Activated CD4-positive, alpha-beta T cell treated with anti-CD3 and anti-CD28 coated beads for 36 hours (primary cell): ENCODE measurements at regions of chr6 and their contacts with region 1.

Region 1: GRCh38 chr6:24283043-24283985 is 74.5 kb downstream of the DCDC2 start:
- DNase-seq: peak; percentile 68
- ATAC-seq: peak; percentile 89
- H3K4me3 Mint-ChIP-seq: no peak overlapping the region
- H3K27ac Mint-ChIP-seq: no peak overlapping the region
- H3K4me1 Mint-ChIP-seq: peaks cover 6% of the 10 kb centered on the region
- H3K27me3 Mint-ChIP-seq: peaks cover 12% of the 10 kb centered on the region

Region 2: DNA sequence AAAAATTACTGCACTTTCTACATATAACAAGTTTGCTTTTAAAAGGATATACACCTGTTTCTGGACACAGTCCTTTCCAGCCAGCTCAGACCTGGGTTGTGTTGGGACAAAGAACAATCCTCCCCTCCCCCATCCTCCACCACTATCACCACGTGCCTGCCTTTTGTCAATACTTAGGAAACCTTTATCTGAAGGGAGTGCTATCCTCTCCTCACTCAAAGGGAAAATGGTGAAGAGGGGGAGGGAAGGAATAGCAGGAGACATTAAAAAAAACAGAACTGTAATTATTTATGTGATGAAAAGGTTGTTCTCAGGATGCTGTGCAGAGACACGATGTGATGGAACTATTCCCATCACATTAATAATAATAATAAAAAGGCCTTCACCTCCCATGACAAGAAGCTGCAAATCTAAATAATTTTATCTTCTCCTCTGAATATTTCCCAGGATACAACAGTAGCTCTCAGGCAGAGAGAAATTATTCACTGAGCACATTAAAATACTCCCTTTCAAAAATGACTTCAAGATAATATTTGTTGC is 51.8 kb before region 1 on chr6:
- CTCF ChIA-PET with region 1: no interaction called
- POLR2A ChIA-PET with region 1: no interaction called
- intact Hi-C with region 1: no loop called
- DNase-seq: no peak
- ATAC-seq: no peak
- H3K4me3 Mint-ChIP-seq: no peak overlapping the region
- H3K27ac Mint-ChIP-seq: no peak overlapping the region
- H3K4me1 Mint-ChIP-seq: no peaks in the 10 kb centered on the region
- H3K27me3 Mint-ChIP-seq: peaks cover 22% of the 10 kb centered on the region

Region 3: DNA sequence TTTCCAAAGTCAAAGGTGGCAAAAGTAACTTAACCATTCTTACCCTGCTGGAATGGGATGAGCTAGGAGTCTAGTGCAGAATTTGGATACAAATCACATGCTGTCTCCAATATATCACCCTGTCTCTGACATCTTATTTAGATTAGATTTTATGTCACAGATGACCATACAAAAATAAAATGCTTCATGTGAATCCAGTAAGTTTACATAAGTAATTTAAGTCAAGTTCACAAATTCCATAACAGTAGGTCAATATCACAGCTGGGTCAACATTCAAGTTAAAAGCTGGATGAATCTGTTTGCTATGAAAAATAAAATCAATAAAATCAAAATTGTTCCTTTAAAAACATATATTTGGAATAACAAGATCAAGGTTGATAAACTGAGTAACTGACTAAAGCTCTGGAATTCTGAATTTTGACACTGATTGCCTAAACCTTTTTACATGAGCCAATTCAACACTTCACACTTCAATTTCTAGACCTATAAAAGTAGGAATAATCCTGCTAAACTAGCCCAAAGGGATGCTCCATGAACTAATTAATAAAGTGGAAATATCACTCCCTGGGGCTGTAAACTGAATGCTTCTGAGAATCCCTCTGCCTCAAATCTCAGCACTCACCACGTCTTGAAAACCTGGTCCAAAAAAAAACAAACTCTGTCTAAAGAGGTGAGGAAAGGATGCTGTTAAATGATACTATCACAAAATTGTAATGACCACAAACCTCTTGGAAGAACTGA is 23.5 kb after region 1 on chr6:
- CTCF ChIA-PET with region 1: no interaction called
- POLR2A ChIA-PET with region 1: no interaction called
- intact Hi-C with region 1: no loop called
- DNase-seq: no peak
- ATAC-seq: no peak
- H3K4me3 Mint-ChIP-seq: no peak overlapping the region
- H3K27ac Mint-ChIP-seq: no peak overlapping the region
- H3K4me1 Mint-ChIP-seq: no peaks in the 10 kb centered on the region
- H3K27me3 Mint-ChIP-seq: peaks cover 16% of the 10 kb centered on the region

Region 4: DNA sequence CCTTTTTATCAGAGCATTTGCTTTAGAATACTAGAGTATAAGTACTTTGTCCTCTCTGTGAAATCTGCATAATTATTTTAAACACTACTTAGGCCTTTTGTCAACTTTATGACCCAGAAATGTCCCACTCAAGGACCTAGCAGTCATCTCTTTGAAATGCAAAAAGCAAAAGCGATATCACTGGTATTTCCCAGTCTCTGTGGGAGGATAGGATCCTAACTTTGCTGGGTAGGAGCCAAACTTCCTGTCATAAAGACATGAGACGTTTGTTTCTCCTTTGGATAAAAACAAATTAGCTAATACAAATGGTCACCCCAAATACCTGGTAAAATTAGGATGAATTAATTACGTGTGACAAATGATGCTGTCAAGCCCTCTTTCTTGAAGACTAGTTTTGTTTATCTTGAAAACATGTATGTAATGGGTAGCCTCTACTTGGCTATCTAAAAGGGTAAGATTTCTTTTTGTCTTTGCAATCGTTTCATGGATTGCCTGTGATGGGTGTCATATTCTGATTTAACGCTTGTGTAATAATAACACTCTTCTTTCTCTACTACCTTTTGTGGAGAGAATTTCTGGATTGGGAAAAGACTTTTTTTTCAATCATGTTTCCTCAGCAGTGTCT is 38.3 kb after region 1 on chr6:
- CTCF ChIA-PET with region 1: no interaction called
- POLR2A ChIA-PET with region 1: no interaction called
- intact Hi-C with region 1: no loop called
- DNase-seq: no peak
- ATAC-seq: no peak
- H3K4me3 Mint-ChIP-seq: no peak overlapping the region
- H3K27ac Mint-ChIP-seq: no peak overlapping the region
- H3K4me1 Mint-ChIP-seq: no peaks in the 10 kb centered on the region
- H3K27me3 Mint-ChIP-seq: peaks cover 23% of the 10 kb centered on the region

Region 5: GRCh38 chr6:24359640-24360454 is 76.5 kb after region 1 on chr6:
- CTCF ChIA-PET with region 1: interaction called, 14 read pairs
- POLR2A ChIA-PET with region 1: no interaction called
- intact Hi-C with region 1: loop called (anchors 1 to 2 kb)
- DNase-seq: peak; percentile 95
- ATAC-seq: peak; percentile 96
- H3K4me3 Mint-ChIP-seq: peak overlapping the region; percentile 70
- H3K27ac Mint-ChIP-seq: peak overlapping the region; percentile 61
- H3K4me1 Mint-ChIP-seq: peaks cover 28% of the 10 kb centered on the region
- H3K27me3 Mint-ChIP-seq: peaks cover 18% of the 10 kb centered on the region

Region 6: DNA sequence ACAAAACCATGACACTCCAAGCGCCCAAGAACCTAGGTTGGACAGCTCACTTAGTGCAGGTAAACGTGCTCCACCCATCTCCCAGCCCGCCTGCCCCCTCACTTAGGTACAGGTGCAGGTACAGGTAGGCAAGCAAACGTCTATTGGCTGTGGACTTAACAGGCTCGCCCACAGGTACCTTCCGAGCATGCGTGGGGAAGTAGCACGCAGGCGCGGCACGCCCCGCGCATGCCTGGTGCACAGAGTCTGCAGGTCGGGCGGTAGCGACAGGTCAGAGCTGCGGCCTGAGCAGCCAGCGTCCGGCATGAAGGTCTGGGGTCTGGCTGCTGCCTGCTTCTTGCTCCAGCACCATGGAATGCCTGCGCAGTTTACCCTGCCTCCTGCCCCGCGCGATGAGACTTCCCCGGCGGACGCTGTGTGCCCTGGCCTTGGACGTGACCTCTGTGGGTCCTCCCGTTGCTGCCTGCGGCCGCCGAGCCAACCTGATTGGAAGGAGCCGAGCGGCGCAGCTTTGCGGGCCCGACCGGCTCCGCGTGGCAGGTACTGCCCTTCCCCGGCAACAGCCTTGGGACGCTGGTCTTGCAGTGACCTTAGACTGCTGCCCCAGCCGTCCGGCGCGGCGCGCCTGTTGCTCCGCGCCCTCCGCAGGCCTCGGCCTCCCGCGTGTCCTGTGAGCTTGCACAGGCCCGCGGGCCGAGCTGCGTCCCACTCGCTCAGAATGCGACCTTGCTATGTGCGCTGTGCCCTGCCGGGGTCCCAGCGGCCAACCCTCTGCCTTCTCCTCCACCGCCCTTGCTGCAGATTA is 119.6 kb after region 1 on chr6 and contains the start of gene MRS2:
- CTCF ChIA-PET with region 1: interaction called, 5 read pairs
- POLR2A ChIA-PET with region 1: no interaction called
- intact Hi-C with region 1: loop called in 1 of 2 experiments (anchors 1 kb)
- DNase-seq: peak; percentile 84
- ATAC-seq: peak; percentile 97
- H3K4me3 Mint-ChIP-seq: peak within 1 kb of the TSS; percentile 93
- H3K27ac Mint-ChIP-seq: peak within 1 kb of the TSS; percentile 86
- H3K4me1 Mint-ChIP-seq: peaks cover 24% of the 10 kb centered on the region
- H3K27me3 Mint-ChIP-seq: peaks cover 13% of the 10 kb centered on the region
- total RNA-seq, gene MRS2: 21.0 to 25.5 TPM

Region 7: DNA sequence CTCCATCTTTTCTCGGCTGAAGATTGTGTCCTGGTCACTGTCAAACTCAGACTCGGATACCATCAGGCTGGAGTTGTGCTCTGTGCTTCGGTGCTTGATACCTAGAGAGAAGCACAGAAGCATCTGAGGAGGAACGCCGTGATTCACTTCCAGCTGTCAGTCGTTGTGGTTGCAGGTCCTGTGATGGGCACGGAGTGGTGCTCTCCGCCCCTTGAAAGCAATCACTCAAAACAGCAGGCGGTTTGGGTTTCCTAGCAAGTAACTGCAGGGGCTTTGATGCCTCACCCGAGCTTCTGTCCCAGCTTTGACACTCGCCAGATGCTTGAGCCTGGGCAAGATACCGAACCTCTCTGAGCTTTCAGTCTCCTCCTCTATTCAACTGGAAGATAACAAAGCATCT is 263.9 kb after region 1 on chr6:
- CTCF ChIA-PET with region 1: no interaction called
- POLR2A ChIA-PET with region 1: no interaction called
- intact Hi-C with region 1: loop called in 1 of 2 experiments (anchors 10 kb)
- DNase-seq: peak; percentile 75
- ATAC-seq: peak; percentile 97
- H3K4me3 Mint-ChIP-seq: no peak overlapping the region
- H3K27ac Mint-ChIP-seq: no peak overlapping the region
- H3K4me1 Mint-ChIP-seq: peaks cover 5% of the 10 kb centered on the region
- H3K27me3 Mint-ChIP-seq: peaks cover 2% of the 10 kb centered on the region

Region 8: DNA sequence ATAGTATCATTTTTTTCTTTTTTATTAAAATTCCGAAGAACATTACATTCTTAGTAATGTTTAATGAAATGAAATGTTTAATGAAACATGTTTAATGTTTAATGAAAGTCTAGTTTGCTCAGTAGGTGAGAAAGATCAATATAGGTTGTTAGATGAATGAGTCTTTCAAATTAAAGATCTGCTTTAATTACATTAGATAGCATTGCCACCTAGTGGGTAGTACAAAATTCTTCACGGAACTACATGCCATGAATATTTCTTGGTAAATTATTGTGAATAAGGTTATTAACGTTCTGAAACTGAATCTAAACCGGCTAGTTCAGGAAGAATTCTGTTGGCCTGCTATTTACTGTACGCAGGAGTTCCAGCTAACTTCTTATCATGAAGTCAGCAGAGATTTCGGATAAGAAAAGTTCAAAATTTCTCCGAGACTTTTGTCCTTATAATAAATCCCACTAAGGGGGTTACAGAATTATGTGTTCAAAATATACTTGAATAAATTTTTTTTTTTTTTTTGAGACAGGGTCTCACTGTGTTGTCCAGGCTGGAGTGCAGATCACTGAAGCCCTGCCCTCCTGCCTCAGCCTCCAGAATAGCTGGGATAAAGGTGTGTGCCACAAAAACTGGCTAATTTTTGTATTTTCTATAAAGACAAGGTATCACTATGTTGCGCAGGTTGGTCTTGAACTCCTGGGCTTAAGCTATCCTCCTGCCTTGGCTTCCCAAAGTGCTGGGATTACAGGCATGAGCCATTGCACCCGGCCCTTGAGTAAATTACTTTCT is 483.6 kb after region 1 on chr6:
- CTCF ChIA-PET with region 1: no interaction called
- POLR2A ChIA-PET with region 1: no interaction called
- intact Hi-C with region 1: loop called in 1 of 2 experiments (anchors 10 kb)
- DNase-seq: no peak
- ATAC-seq: peak; percentile 76
- H3K4me3 Mint-ChIP-seq: no peak overlapping the region
- H3K27ac Mint-ChIP-seq: no peak overlapping the region
- H3K4me1 Mint-ChIP-seq: no peaks in the 10 kb centered on the region
- H3K27me3 Mint-ChIP-seq: no peaks in the 10 kb centered on the region